Activated naive CD4-positive, alpha-beta T cell treated with anti-CD3 and anti-CD28 coated beads for 36 hours (primary cell): ENCODE measurements at regions of chr19 and their contacts with region 1.

Region 1: GRCh38 chr19:2328401-2329148 is at the starts of genes LSM7 and SPPL2B:
- DNase-seq: peak; percentile 92
- H3K4me3 Mint-ChIP-seq: peak within 1 kb of the TSS; percentile 96
- H3K27ac Mint-ChIP-seq: peak within 1 kb of the TSS; percentile 94
- H3K4me1 Mint-ChIP-seq: peaks cover 72% of the 10 kb centered on the region
- H3K27me3 Mint-ChIP-seq: no peaks in the 10 kb centered on the region
- total RNA-seq, gene LSM7: 162 to 164 TPM
- total RNA-seq, gene SPPL2B: 56.8 to 59.6 TPM

Region 2: GRCh38 chr19:2010135-2010668 is 318.4 kb before region 1 on chr19:
- CTCF ChIA-PET with region 1: no interaction called
- intact Hi-C with region 1: no loop called
- DNase-seq: no peak
- H3K4me3 Mint-ChIP-seq: no peak overlapping the region
- H3K27ac Mint-ChIP-seq: no peak overlapping the region
- H3K4me1 Mint-ChIP-seq: peaks cover 10% of the 10 kb centered on the region
- H3K27me3 Mint-ChIP-seq: no peaks in the 10 kb centered on the region

Region 3: DNA sequence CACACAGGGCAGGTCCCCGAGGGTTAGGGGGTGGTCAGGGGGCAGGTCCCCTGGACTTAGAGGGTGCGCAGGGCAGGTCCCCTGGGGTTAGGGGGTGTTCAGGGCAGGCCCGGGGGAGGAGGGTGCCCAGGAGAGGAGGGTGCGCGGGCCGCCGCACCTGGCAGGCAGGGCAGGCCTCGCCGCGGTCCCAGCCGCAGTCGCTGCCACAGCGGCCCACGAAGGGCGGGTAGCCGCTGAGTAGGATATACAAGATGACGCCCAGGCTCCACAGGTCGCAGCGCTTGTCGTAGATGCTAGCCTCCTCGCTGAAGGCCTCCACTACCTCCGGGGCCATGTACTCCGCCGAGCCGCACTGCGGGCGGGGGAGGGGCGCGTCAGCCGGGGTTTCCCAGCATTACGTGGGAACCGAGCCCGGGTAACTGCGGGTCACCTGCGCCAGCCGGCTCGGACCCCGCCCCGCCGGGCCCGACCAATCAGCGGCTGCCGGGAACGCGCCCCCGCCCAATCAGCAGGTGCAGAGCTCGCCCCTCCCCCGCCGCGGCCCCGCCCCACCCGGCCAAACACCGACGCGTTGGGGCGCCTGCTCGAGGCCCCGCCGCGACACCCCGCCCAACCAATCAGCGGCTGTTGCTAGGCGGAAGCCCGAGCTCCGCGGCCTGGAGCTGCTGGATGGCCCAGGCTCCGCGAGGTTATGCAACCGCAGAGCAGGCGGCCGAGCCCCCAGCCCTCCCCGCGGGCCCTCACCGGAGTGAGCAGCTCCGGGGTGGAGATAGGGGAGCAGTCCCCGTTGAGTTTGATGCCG is 286.7 kb before region 1 on chr19:
- CTCF ChIA-PET with region 1: no interaction called
- intact Hi-C with region 1: loop called (anchors 1 kb)
- DNase-seq: peak; percentile 99
- H3K4me3 Mint-ChIP-seq: peak overlapping the region; percentile 81
- H3K27ac Mint-ChIP-seq: peak overlapping the region; percentile 92
- H3K4me1 Mint-ChIP-seq: peaks cover 31% of the 10 kb centered on the region
- H3K27me3 Mint-ChIP-seq: no peaks in the 10 kb centered on the region

Region 4: DNA sequence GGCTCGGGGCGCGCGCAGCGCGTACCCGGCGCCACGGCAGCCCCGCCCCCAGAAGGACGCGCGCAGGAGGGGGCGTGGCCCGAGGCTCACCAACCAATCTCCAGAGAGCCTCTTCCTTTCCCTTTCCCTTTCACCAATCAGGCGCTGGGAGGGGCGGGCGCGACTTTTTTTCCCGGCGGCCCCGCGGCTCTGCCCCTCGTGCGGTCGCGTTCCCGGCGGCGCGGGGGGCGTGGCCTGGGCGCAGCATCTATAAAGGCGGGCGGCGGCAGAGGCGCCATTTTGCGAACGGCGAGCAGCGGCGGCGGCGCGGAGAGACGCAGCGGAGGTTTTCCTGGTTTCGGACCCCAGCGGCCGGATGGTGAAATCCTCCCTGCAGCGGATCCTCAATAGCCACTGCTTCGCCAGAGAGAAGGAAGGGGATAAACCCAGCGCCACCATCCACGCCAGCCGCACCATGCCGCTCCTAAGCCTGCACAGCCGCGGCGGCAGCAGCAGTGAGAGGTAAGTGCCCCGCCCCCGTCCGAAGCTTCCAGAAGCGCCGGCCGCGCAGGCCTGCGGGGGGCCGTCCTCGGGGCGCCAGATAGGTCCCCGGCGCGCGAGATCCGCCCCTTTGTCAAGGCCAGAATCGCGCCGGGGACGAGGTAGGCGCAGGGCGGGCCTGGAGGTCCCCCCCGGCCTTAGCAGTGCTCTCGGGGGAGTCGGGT is 59.2 kb before region 1 on chr19:
- CTCF ChIA-PET with region 1: no interaction called
- intact Hi-C with region 1: loop called (anchors 1 kb)
- DNase-seq: peak; percentile 99
- H3K4me3 Mint-ChIP-seq: peak overlapping the region; percentile 89
- H3K27ac Mint-ChIP-seq: peak overlapping the region; percentile 92
- H3K4me1 Mint-ChIP-seq: peaks cover 43% of the 10 kb centered on the region
- H3K27me3 Mint-ChIP-seq: no peaks in the 10 kb centered on the region

Region 5: GRCh38 chr19:2289714-2290435 is 38.7 kb before region 1 on chr19:
- CTCF ChIA-PET with region 1: interaction called, 3 read pairs
- intact Hi-C with region 1: loop called (anchors 5 kb)
- DNase-seq: peak; percentile 72
- H3K4me3 Mint-ChIP-seq: peak overlapping the region; percentile 75
- H3K27ac Mint-ChIP-seq: no peak overlapping the region
- H3K4me1 Mint-ChIP-seq: peaks cover 27% of the 10 kb centered on the region
- H3K27me3 Mint-ChIP-seq: peaks cover 5% of the 10 kb centered on the region

Region 6: DNA sequence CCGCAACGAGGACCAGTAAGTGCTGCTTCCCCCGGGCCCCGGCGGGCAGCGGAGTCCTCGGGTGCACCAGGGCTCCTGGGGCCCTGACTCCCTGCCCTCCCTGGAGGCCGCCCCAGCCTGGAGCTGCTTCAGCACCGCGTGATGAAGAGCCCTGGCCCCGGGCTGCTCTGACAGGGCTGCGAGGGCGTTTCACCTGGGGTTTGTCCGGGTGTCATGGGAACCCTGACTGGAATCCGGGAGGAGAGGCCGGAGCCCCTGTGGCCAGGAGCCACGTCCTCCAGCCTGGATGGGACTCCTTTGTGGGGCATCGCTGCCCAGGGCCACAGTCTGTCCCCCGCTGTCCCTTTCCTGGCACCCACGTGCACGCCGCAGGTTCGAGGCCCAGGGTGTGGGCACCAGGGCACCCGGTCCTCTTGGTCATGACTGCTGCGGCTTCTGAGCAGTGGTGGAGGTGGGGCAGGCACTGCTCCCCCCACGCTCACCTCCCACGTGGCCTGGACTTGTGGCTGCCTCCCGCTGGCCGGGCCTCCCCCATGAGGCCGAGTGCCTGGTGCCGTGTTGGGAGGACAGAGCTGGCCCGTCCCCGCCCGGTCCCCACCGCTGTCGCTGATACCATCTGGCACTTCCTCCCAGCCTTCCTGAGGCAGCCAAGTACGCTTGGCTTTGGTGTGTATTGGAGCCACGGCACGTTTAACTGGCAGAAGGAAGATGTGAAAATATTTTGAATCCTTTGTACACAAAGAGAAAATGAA is 12.6 kb after region 1 on chr19:
- CTCF ChIA-PET with region 1: no interaction called
- intact Hi-C with region 1: no loop called
- DNase-seq: no peak
- H3K4me3 Mint-ChIP-seq: no peak overlapping the region
- H3K27ac Mint-ChIP-seq: no peak overlapping the region
- H3K4me1 Mint-ChIP-seq: peaks cover under 1% of the 10 kb centered on the region
- H3K27me3 Mint-ChIP-seq: no peaks in the 10 kb centered on the region

Region 7: DNA sequence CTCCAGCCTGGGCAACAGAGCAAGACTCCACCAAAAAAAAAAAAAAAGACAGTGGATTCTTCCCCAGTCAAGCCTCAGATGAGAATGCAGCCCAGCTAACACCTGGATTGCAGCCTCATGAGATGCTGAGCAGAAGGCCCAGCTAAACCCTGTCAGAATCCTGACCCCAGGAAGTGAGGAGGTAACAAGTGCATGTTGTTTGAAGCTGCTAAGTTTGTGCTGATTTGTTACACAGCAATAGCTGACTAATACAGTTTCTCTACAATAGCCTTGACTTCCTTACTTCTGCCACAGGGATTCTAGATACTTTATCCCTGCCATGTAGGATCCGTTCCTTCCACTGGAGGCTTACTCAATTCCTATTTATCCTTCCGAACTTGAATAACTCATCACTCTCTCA is 52.0 kb after region 1 on chr19:
- CTCF ChIA-PET with region 1: no interaction called
- intact Hi-C with region 1: no loop called
- DNase-seq: no peak
- H3K4me3 Mint-ChIP-seq: no peak overlapping the region
- H3K27ac Mint-ChIP-seq: no peak overlapping the region
- H3K4me1 Mint-ChIP-seq: no peaks in the 10 kb centered on the region
- H3K27me3 Mint-ChIP-seq: no peaks in the 10 kb centered on the region

Region 8: GRCh38 chr19:2391118-2391725 is 62.6 kb after region 1 on chr19:
- CTCF ChIA-PET with region 1: interaction called, 6 read pairs
- intact Hi-C with region 1: loop called (anchors 5 kb)
- DNase-seq: peak; percentile 56
- H3K4me3 Mint-ChIP-seq: no peak overlapping the region
- H3K27ac Mint-ChIP-seq: no peak overlapping the region
- H3K4me1 Mint-ChIP-seq: peaks cover 15% of the 10 kb centered on the region
- H3K27me3 Mint-ChIP-seq: no peaks in the 10 kb centered on the region